PC-9 (cell line): ENCODE measurements at regions of chr11 and their contacts with region 1.

Region 1: DNA sequence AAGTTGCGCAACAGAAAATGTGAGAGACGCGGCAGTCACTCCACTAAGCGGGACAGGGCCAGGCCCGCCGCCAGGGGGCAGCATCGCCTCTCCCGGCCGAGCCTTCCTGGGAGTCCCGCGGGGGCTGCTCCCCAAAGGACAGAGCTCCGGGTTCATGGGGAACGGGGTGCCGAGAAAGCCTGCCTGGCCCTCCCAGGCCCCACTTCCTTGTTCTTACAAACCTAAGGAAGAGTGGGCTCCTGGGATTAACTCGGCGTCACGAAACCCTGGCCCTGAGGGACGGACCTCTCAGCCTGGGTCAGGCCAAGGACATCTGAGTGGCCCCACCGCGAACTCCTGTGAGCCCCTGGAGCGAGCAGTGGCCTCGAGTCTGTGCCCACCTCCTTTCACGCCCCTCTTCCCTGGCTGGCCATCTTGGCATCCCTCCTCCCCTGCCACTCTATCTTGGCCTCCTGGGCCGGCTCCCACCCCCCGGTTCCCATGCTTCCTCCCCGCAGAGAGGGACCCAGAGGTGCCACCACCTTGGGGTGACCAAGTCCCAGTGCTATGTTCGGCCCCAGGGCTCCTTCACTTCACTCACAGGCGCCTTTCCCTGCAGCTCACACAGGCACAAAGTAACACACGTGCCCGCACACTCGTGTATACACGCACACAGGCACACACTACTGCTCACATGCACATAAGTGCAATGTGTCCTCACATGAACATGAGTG is 99.9 kb upstream of the FGF3 start:
- DNase-seq: peak; percentile 56 to 80
- H3K4me3 ChIP-seq: peak overlapping the region; percentile 16; the same call in 1 of the 2 replicates
- H3K27ac ChIP-seq: no peak overlapping the region
- H3K4me1 ChIP-seq: peaks cover 56% of the 10 kb centered on the region
- H3K27me3 ChIP-seq: no peaks in the 10 kb centered on the region
- CTCF ChIP-seq: peak; percentile 98

Region 2: GRCh38 chr11:69675811-69676371 is 243.2 kb before region 1 on chr11:
- CTCF ChIA-PET with region 1: interaction called, 20 read pairs
- POLR2A ChIA-PET with region 1: no interaction called
- intact Hi-C with region 1: no loop called
- DNase-seq: no peak
- H3K4me3 ChIP-seq: peak overlapping the region; percentile 96
- H3K27ac ChIP-seq: peak overlapping the region; percentile 51
- H3K4me1 ChIP-seq: peaks cover 30% of the 10 kb centered on the region
- H3K27me3 ChIP-seq: no peaks in the 10 kb centered on the region
- CTCF ChIP-seq: no peak

Region 3: DNA sequence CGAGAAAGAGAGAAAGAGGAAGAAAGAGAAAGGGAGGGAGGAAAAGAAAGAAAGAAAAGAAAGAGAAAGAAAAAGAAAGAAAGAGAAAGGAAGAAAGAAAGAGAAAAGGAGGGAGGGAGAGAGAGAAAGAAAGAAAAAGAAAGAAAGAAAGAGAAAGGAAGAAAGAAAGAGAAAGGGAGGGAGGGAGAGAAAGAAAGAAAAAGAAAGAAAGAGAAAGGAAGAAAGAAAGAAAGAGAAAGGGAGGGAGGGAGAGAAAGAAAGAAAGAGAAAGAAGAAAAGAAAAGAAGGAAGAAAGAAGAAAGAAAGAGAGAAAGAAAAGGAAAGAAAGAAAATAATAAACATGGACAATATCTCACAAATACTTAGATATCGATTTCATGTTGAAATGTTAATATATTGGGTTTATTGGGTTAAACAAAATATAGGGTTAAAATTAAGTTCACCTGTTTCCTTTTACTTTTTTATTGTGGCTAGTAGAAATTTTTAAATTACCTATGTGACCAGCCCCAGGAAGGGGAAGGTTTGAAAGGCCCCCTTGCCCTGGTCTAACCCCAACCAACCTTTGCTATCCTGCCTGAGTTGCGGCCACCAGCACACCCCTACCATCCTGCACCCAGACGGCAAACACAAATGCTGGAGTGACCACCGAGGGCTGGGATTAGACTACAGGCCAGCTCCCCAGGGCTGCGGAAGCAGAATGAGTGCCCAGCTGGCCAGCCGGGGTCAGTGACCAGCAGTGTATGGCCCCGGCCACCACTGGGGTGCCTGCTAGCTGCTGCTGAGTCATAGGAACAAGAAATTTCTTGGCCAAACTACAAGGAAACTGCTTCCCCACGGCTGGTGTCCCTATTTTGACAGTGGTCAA is 18.9 kb before region 1 on chr11:
- CTCF ChIA-PET with region 1: interaction called, 11 read pairs
- POLR2A ChIA-PET with region 1: no interaction called
- intact Hi-C with region 1: loop called (anchors 1 kb)
- DNase-seq: peak; percentile 92 to 98
- H3K4me3 ChIP-seq: peak overlapping the region; percentile 11; the same call in 1 of the 2 replicates
- H3K27ac ChIP-seq: peak overlapping the region; percentile 78
- H3K4me1 ChIP-seq: peaks cover 72% of the 10 kb centered on the region
- H3K27me3 ChIP-seq: no peaks in the 10 kb centered on the region
- CTCF ChIP-seq: 0 out of 2 replicates have a peak, but pooled peaks have one; percentile 21

Region 4: DNA sequence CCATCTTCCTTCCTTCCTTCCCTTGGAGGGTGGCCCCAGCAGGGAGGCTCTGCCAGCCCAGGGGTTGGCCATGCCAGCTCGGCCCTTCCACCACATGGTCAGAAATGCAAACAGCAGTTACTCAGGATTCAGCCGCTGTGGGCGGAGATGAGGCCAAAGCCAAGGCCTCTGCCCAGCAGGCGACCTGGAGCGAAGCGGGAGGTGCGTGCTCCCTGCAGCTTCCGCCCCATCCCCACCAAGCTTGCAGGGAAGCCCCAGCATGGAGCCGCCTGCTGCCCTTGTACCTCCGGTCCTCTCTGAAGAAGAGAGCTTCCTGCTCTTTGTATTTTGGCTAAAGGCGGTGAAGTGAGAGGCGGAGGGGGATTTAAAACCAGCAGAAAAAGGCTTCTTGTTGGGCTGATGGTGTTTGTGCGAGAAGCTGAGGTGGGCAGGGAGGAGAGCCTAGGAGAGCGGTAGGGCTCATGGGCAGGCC is 209.4 kb after region 1 on chr11:
- CTCF ChIA-PET with region 1: interaction called, 3 read pairs
- POLR2A ChIA-PET with region 1: no interaction called
- intact Hi-C with region 1: loop called (anchors 2 kb)
- DNase-seq: peak; percentile 51 to 78
- H3K4me3 ChIP-seq: no peak overlapping the region
- H3K27ac ChIP-seq: peak overlapping the region; percentile 18; the same call in 1 of the 2 replicates
- H3K4me1 ChIP-seq: peaks cover 22% of the 10 kb centered on the region
- H3K27me3 ChIP-seq: no peaks in the 10 kb centered on the region
- CTCF ChIP-seq: 0 out of 2 replicates have a peak, but pooled peaks have one; percentile 26

Region 5: DNA sequence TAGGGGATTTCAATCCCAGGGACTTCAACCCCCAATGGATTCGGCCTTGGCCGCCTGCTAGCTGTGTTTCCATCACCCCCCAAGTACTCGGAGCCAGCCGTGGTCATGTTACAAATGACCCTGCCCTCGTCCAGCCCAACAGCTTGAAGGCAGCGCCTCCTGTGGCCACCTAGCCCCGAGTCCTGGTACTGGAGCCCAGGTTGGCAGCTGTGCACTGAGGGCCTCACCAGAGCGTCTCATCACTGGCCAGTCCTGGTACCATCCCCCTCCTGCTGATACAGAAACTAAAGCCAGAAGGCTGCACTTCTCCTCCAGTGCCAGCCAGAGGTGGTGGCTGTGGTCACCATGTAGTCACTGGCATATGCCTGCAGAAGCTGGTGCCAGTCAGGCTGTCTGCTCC is 239.1 kb after region 1 on chr11:
- CTCF ChIA-PET with region 1: no interaction called
- POLR2A ChIA-PET with region 1: no interaction called
- intact Hi-C with region 1: loop called (anchors 1 kb)
- DNase-seq: no peak
- H3K4me3 ChIP-seq: no peak overlapping the region
- H3K27ac ChIP-seq: 0 out of 2 replicates have a peak overlapping the region, but pooled peaks have one; percentile 3
- H3K4me1 ChIP-seq: peaks cover 19% of the 10 kb centered on the region
- H3K27me3 ChIP-seq: no peaks in the 10 kb centered on the region
- CTCF ChIP-seq: peak; percentile 52; the same call in 1 of the 2 replicates

Region 6: GRCh38 chr11:70265341-70265740 is 346.2 kb after region 1 on chr11:
- CTCF ChIA-PET with region 1: no interaction called
- POLR2A ChIA-PET with region 1: no interaction called
- intact Hi-C with region 1: no loop called
- DNase-seq: no peak
- H3K4me3 ChIP-seq: no peak overlapping the region
- H3K27ac ChIP-seq: no peak overlapping the region
- H3K4me1 ChIP-seq: peaks cover 18% of the 10 kb centered on the region
- H3K27me3 ChIP-seq: no peaks in the 10 kb centered on the region
- CTCF ChIP-seq: no peak